ENCODE measurements at regions of chr18 and their contacts with region 1.

Region 1: DNA sequence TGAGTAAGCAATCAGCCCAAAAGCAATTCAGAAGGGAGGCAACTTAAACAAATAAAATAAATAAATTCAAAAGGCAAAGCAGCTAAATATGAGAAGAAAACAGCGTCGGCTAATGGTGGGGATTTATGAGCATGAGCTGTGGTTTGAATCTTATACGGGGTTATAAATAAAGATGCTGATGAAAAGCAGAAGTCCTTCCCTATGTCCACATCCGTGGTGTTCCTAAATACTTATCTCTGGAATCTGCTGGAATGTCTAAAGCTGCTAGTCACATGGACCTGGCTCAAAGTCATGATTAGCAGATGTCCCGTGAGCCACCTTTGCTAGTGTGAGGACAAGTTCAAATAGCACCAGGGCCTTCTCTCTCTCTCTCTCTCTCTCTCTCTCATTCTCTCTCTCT is 33.8 kb downstream of the SMIM21 start:
- DNase-seq: no peak
- H3K4me3 ChIP-seq: no peak overlapping the region
- H3K27ac ChIP-seq: no peak overlapping the region
- H3K4me1 ChIP-seq: peaks cover 0 to 16% (median 11%) of the 10 kb centered on the region in 4 donors
- H3K27me3 ChIP-seq: no peaks in the 10 kb centered on the region
- CTCF ChIP-seq: no peak
- EP300 ChIP-seq: no peak
- POLR2A ChIP-seq: no peak

Region 2: DNA sequence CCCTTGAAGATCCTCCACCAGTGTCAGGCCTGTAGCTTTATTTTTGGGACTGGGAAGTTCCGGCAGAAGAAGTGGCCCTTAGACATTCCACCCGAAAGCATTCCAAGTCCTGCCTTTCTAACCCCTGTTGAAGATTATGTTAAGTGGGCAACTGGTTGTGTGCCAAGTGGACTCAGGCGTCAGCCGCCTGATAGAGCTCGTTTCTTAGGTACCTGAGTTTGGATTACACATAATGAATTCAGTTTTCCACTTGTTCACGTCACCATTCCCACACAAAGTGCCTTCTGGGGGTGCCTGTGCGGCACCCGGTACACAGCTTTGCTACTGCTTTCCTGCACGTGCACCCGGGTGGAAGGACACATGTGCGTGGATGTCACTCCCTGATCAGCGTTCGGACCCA is 341.2 kb before region 1 on chr18:
- intact Hi-C with region 1: no loop called
- DNase-seq: no peak
- H3K4me3 ChIP-seq: no peak overlapping the region
- H3K27ac ChIP-seq: no peak overlapping the region
- H3K4me1 ChIP-seq: peaks cover 0 to 12% (median 4%) of the 10 kb centered on the region in 4 donors
- H3K27me3 ChIP-seq: no peaks in the 10 kb centered on the region
- CTCF ChIP-seq: no peak
- EP300 ChIP-seq: no peak
- POLR2A ChIP-seq: no peak

Region 3: GRCh38 chr18:75433098-75433497 is 39.4 kb after region 1 on chr18:
- intact Hi-C with region 1: loop called (anchors 2 kb)
- DNase-seq: no peak
- H3K4me3 ChIP-seq: no peak overlapping the region
- H3K27ac ChIP-seq: no peak overlapping the region
- H3K4me1 ChIP-seq: no peaks in the 10 kb centered on the region
- H3K27me3 ChIP-seq: no peaks in the 10 kb centered on the region
- CTCF ChIP-seq: no peak
- EP300 ChIP-seq: no peak
- POLR2A ChIP-seq: no peak

Measured in sigmoid colon (tissue), 7 donors.